ENCODE measurements at regions of chr3 and their contacts with region 1.

Region 1: GRCh38 chr3:78919021-78919755 is 848.6 kb downstream of the ROBO1 start:
- DNase-seq: peak; percentile 89
- H3K4me3 ChIP-seq: no peak overlapping the region
- H3K27ac ChIP-seq: peak overlapping the region; percentile 50
- H3K4me1 ChIP-seq: peaks cover 10% of the 10 kb centered on the region
- H3K27me3 ChIP-seq: no peaks in the 10 kb centered on the region
- CTCF ChIP-seq: no peak

Region 2: DNA sequence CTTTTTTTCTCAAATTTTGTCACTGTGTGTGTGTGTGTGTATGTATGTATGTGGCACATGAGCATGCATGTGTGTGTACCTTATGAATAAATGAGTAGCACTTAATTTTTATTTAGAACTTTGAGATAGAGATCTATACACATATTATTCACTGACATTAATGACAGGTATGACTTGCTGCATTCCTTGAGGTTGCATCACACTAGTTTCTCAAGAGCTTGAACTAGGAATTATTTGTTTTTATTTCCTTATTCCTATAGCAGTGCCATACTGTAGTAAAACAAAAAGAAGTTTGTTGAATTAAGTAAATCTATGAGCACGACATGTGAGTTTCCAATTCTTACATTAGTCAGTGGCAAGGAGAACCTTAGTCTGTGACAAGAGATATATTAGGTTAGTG is 95.3 kb before region 1 on chr3:
- CTCF ChIA-PET with region 1: interaction called, 11 read pairs
- dilution Hi-C with region 1: no loop called
- in situ Hi-C with region 1: no loop called
- intact Hi-C with region 1: no loop called
- DNase-seq: peak; percentile 73
- H3K4me3 ChIP-seq: no peak overlapping the region
- H3K27ac ChIP-seq: no peak overlapping the region
- H3K4me1 ChIP-seq: peaks cover 7% of the 10 kb centered on the region
- H3K27me3 ChIP-seq: no peaks in the 10 kb centered on the region
- CTCF ChIP-seq: no peak

Measured in mammary epithelial cell (primary cell).